ENCODE measurements at regions of chr19 and their contacts with region 1.

Region 1: DNA sequence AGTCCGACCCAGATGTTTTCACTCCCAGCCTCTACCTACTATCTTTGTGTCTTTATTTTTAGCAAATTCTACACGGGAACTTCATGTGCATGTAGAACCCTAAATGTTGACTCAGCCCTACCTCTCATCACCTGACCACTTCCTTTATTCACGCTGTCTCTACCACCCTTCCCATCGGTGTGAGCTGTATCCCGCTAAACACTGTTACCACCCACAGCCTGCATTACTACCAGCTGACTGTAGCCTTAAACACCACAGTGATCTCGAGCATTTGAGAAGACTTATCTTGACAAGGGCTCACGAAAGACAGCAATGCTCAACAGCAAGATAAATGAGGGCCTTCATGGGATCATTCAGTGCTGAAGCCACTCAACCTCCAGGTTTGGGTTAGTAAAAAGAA is 15.1 kb downstream of the NCR1 start:
- DNase-seq: no peak

Region 2: DNA sequence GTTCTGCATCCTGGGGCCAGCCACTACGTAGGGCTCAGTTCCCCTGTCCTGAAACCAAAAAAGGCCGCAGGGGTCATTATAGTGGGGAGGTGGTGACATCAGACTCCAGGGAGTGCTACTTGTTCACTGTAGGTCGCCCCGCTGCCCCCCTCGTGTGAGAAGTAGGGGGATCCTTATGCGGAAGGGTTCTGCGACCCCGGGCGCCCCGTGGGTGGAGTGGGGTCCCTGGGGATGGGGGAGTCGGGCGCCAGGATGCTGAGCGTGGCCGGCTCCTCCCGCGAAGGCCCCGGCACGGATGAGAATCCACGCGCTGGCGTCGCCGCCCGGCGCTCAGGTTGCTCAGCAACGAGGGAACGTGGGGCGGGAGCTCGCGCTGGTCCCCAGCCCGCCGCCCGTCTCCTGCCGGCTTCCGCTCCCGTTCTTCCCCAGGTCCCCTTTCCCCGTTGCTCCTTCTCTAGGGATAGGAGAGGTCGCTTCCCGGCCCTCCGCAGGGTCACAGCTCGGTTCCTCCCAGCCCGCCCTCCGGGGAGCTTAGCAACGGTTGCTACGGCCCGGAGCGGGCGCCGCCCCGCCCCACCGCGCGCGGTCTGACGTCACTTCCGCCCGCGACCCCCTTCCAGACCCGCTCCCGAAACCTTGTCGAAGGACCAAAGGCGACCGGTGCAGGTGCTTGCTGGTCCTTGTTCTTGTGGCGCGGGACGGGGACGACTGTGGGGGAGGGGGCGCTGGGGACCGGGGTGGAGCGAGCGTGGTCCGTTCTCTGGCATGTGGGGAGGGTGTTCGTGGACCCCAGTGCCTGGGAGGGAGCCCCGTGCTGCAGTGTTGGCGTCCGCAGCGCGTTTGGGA is 563.7 kb after region 1 on chr19 and contains the start of gene NAT14:
- intact Hi-C with region 1: loop called in 1 of 2 experiments (anchors 5 kb)
- DNase-seq: no peak
- total RNA-seq, gene NAT14: 15.8 to 16.3 TPM

Measured in posterior vena cava (tissue), 2 donors.